ENCODE measurements at regions of chr3 and their contacts with region 1.

Region 1: GRCh38 chr3:184362668-184363540 is 1.4 kb downstream of the POLR2H start:
- DNase-seq: peak; percentile 81 to 98 (median 90)
- ATAC-seq: peak; percentile 72
- H3K4me3 ChIP-seq: peak overlapping the region; percentile 94
- H3K4me3 Mint-ChIP-seq: peak overlapping the region; percentile 100
- H3K27ac ChIP-seq: peak overlapping the region; percentile 71 to 80
- H3K27ac Mint-ChIP-seq: peak overlapping the region; percentile 97
- H3K4me1 ChIP-seq: peaks cover 37% of the 10 kb centered on the region
- H3K4me1 Mint-ChIP-seq: peaks cover 26% of the 10 kb centered on the region
- H3K27me3 ChIP-seq: no peaks in the 10 kb centered on the region
- H3K27me3 Mint-ChIP-seq: no peaks in the 10 kb centered on the region
- CTCF ChIP-seq: peak; percentile 48

Region 2: DNA sequence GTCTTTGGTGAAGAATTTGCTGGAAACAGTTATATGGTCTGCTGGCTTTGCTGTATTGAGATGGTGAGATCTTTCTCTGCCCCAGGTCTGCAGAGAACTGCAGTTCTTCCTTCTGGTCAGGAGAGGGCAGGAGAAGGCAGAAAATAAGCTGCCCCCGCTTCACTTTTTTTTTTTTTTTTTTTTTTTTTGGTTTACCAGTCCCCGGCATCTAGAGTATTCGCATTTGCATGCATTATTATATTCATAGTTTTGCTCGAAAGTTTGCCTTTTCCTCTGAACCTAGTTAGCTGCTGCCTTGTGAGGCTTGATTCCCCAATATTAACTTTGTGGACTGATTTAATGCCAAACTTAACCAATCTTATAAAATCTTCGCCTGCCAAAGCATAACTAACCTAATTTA is 467.6 kb before region 1 on chr3:
- CTCF ChIA-PET with region 1: no interaction called
- POLR2A ChIA-PET with region 1: no interaction called
- intact Hi-C with region 1: loop called in 1 of 2 experiments (anchors 10 kb)
- DNase-seq: peak in 9 of 14 experiments; percentile 6 to 76 (median 20)
- ATAC-seq: peak; percentile 88
- H3K4me3 ChIP-seq: no peak overlapping the region
- H3K4me3 Mint-ChIP-seq: no peak overlapping the region
- H3K27ac ChIP-seq: no peak overlapping the region
- H3K27ac Mint-ChIP-seq: no peak overlapping the region
- H3K4me1 ChIP-seq: peaks cover 4% of the 10 kb centered on the region
- H3K4me1 Mint-ChIP-seq: no peaks in the 10 kb centered on the region
- H3K27me3 ChIP-seq: peaks cover 5 to 6% of the 10 kb centered on the region in 2 experiments
- H3K27me3 Mint-ChIP-seq: peaks cover 13% of the 10 kb centered on the region
- CTCF ChIP-seq: peak; percentile 75

Region 3: DNA sequence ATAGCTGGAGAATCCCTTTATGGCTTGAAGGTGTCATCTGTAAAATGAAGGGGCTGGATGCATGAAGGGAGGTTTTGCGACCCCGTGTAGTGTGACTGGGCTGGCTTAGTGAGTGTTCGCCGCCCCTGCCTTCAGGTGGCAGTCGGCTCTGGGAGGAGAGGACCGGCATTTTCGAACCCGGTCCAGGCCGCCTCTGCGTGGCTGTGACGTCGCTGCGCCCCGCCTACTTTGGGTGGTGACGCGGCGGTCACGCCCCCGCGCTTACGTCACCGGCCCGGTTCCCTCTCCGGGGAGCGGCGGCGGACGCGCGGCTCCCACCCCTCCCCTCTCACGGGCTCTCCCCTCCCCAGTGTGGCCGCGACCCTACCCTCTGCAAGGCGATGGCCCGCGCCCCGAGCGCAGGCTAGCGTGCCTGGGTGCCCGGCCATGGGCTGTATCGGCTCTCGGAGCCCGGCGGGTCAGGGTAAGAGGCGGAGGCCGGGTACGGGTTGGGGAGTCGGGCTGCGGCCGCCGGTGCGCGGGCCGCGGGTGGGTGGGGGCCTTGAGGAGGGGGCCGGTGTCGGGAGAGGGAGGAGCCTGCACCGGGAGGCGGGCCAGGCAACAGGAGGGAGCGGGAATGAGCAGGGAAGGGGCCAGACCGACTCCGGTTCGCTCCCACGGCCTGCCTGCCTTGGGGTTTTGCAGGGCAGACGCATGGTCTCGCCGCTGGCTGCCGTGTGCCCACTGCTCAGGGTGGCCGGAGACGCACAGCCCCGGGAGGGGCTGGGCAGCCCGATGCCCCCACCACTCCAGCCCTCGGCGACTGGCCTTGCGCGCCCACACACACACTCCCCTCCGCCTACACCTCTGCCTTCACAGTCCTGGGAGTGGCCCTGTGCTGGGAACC is 27.0 kb before region 1 on chr3:
- CTCF ChIA-PET with region 1: no interaction called
- POLR2A ChIA-PET with region 1: interaction called, 6 read pairs
- intact Hi-C with region 1: loop called in 1 of 2 experiments (anchors 2 kb)
- DNase-seq: peak; percentile 73 to 94 (median 88)
- ATAC-seq: peak; percentile 70
- H3K4me3 ChIP-seq: peak overlapping the region; percentile 64
- H3K4me3 Mint-ChIP-seq: peak overlapping the region; percentile 95
- H3K27ac ChIP-seq: peak overlapping the region; percentile 88 to 95
- H3K27ac Mint-ChIP-seq: peak overlapping the region; percentile 97
- H3K4me1 ChIP-seq: peaks cover 38% of the 10 kb centered on the region
- H3K4me1 Mint-ChIP-seq: peaks cover 34% of the 10 kb centered on the region
- H3K27me3 ChIP-seq: no peaks in the 10 kb centered on the region
- H3K27me3 Mint-ChIP-seq: no peaks in the 10 kb centered on the region
- CTCF ChIP-seq: no peak

Region 4: GRCh38 chr3:184525337-184526087 is 162.6 kb after region 1 on chr3:
- CTCF ChIA-PET with region 1: no interaction called
- POLR2A ChIA-PET with region 1: interaction called, 4 read pairs
- intact Hi-C with region 1: loop called in 1 of 2 experiments (anchors 5 kb)
- DNase-seq: peak in 4 of 14 experiments; percentile 18 to 37 (median 36)
- ATAC-seq: peak; percentile 61
- H3K4me3 ChIP-seq: peak overlapping the region; percentile 72
- H3K4me3 Mint-ChIP-seq: peak overlapping the region; percentile 87
- H3K27ac ChIP-seq: peak overlapping the region in 1 of 2 donors; percentile 35
- H3K27ac Mint-ChIP-seq: peak overlapping the region; percentile 60
- H3K4me1 ChIP-seq: peaks cover 12% of the 10 kb centered on the region
- H3K4me1 Mint-ChIP-seq: peaks cover 19% of the 10 kb centered on the region
- H3K27me3 ChIP-seq: peaks cover 8 to 16% of the 10 kb centered on the region in 2 experiments
- H3K27me3 Mint-ChIP-seq: peaks cover 45% of the 10 kb centered on the region
- CTCF ChIP-seq: no peak

Region 5: GRCh38 chr3:185253645-185254410 is 890.9 kb after region 1 on chr3 and contains the start of gene EHHADH:
- CTCF ChIA-PET with region 1: no interaction called
- POLR2A ChIA-PET with region 1: no interaction called
- intact Hi-C with region 1: no loop called
- DNase-seq: peak in 13 of 14 experiments; percentile 10 to 64 (median 41)
- ATAC-seq: peak; percentile 83
- H3K4me3 ChIP-seq: peak within 1 kb of the TSS; percentile 72
- H3K4me3 Mint-ChIP-seq: peak within 1 kb of the TSS; percentile 78
- H3K27ac ChIP-seq: no peak within 1 kb of the TSS
- H3K27ac Mint-ChIP-seq: no peak within 1 kb of the TSS
- H3K4me1 ChIP-seq: peaks cover 8% of the 10 kb centered on the region
- H3K4me1 Mint-ChIP-seq: peaks cover 4% of the 10 kb centered on the region
- H3K27me3 ChIP-seq: no peaks in the 10 kb centered on the region
- H3K27me3 Mint-ChIP-seq: peaks cover 33% of the 10 kb centered on the region
- CTCF ChIP-seq: no peak
- total RNA-seq, gene EHHADH: 0.11 to 0.52 TPM

Measured in CD4-positive, alpha-beta T cell (primary cell).